ENCODE measurements at regions of chr2 and their contacts with region 1.

Region 1: GRCh38 chr2:46706264-46706983 is 209.2 kb downstream of the MCFD2 start:
- DNase-seq: no peak
- ATAC-seq: no peak
- H3K4me3 ChIP-seq: no peak overlapping the region
- H3K27ac ChIP-seq: no peak overlapping the region
- H3K4me1 ChIP-seq: peaks cover 78% of the 10 kb centered on the region
- H3K27me3 ChIP-seq: no peaks in the 10 kb centered on the region
- CTCF ChIP-seq: no peak
- EP300 ChIP-seq: no peak
- POLR2A ChIP-seq: no peak
- RAD21 ChIP-seq: no peak

Region 2: GRCh38 chr2:46751897-46752296 is 45.5 kb after region 1 on chr2:
- CTCF ChIA-PET with region 1: no interaction called
- POLR2A ChIA-PET with region 1: no interaction called
- in situ Hi-C with region 1: no loop called
- intact Hi-C with region 1: loop called (anchors 5 kb)
- DNase-seq: no peak
- ATAC-seq: no peak
- H3K4me3 ChIP-seq: no peak overlapping the region
- H3K27ac ChIP-seq: peak overlapping the region; percentile 38
- H3K4me1 ChIP-seq: peaks cover 54% of the 10 kb centered on the region
- H3K27me3 ChIP-seq: no peaks in the 10 kb centered on the region
- CTCF ChIP-seq: no peak
- EP300 ChIP-seq: no peak
- POLR2A ChIP-seq: no peak
- RAD21 ChIP-seq: no peak

Measured in HepG2 (cell line).